Heart left ventricle (tissue), 16 donors: ENCODE measurements at regions of chr2 and their contacts with region 1.

Region 1: DNA sequence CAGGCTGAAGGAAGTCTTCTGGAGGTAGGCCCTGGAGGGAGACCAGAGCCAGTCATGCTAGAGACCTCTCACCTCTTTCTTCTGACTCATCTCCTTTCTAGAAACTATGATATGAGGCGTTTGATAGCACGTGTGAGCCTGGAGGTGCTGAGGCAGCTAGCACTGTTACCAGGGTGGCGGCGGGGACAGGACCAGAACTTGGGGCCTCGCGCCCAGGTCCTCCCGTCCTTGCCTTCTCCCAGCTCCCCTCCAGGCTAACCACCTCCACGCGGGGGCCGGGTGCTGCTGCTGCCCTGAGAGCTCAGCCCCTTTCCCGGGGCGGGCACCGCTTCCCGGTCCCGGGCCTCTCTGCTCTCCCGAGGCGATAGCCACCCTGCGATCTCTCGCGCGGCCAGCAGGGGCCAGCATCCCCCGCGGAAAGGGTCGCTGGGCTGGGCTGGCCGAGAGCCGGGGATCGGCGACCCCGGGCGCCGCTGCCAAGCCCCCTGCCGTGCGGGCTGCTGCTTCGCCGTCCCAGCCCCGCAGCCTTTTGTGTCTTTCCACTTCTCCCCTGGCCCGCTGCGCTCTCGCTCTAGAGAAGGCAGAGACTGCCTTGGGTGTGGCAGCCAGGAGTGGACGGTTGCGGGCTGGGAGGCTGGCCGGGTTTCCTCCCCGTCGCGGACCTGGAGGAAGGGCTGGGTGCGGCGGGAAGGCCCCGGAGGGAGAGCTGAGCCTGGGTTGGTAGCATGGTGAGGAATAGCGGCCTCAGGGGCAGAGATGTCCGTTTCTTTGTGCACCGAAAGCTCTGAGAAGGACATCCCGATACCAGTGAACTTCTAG is 49.1 kb downstream of the TMEM17 start:
- DNase-seq: peak; percentile 67 to 87 (median 74)
- ATAC-seq: peak; percentile 57 to 93 (median 88)
- H3K4me3 ChIP-seq: peak overlapping the region; percentile 40 to 90 (median 68)
- H3K27ac ChIP-seq: peak overlapping the region; percentile 43 to 87 (median 74)
- H3K4me1 ChIP-seq: peaks cover 0 to 16% (median 8%) of the 10 kb centered on the region in 12 donors
- H3K27me3 ChIP-seq: no peaks in the 10 kb centered on the region
- CTCF ChIP-seq: peak in 11 of 12 donors; percentile 89 to 100 (median 97)
- POLR2A ChIP-seq: no peak

Region 2: GRCh38 chr2:62505750-62506420 is 49.0 kb after region 1 on chr2 and contains the start of gene TMEM17:
- intact Hi-C with region 1: loop called in 2 of 10 experiments (anchors 2 to 5 kb)
- DNase-seq: peak; percentile 95 to 96 (median 96)
- ATAC-seq: peak; percentile 98
- H3K4me3 ChIP-seq: peak within 1 kb of the TSS; percentile 58 to 84 (median 76)
- H3K27ac ChIP-seq: peak within 1 kb of the TSS; percentile 80 to 95 (median 88)
- H3K4me1 ChIP-seq: peaks cover 0 to 18% (median 7%) of the 10 kb centered on the region in 12 donors
- H3K27me3 ChIP-seq: no peaks in the 10 kb centered on the region
- CTCF ChIP-seq: peak in 1 of 12 donors; percentile 9
- POLR2A ChIP-seq: peak in 1 of 2 donors; percentile 31
- total RNA-seq, gene TMEM17: 1.2 to 2.3 (median 1.6) TPM

Region 3: GRCh38 chr2:62556086-62556485 is 99.2 kb after region 1 on chr2:
- intact Hi-C with region 1: no loop called
- DNase-seq: no peak
- ATAC-seq: no peak
- H3K4me3 ChIP-seq: no peak overlapping the region
- H3K27ac ChIP-seq: no peak overlapping the region
- H3K4me1 ChIP-seq: no peaks in the 10 kb centered on the region
- H3K27me3 ChIP-seq: no peaks in the 10 kb centered on the region
- CTCF ChIP-seq: no peak
- POLR2A ChIP-seq: no peak

Region 4: GRCh38 chr2:62774555-62775366 is 317.8 kb after region 1 on chr2:
- intact Hi-C with region 1: loop called (anchors 1 to 2 kb)
- DNase-seq: no peak
- ATAC-seq: peak in 2 of 4 donors; percentile 52 to 75
- H3K4me3 ChIP-seq: no peak overlapping the region
- H3K27ac ChIP-seq: peak overlapping the region in 1 of 12 donors; percentile 15
- H3K4me1 ChIP-seq: peaks cover 0 to 7% (median 0%) of the 10 kb centered on the region in 12 donors
- H3K27me3 ChIP-seq: no peaks in the 10 kb centered on the region
- CTCF ChIP-seq: peak; percentile 76 to 96 (median 84)
- POLR2A ChIP-seq: no peak

Region 5: GRCh38 chr2:63023444-63023843 is 566.5 kb after region 1 on chr2:
- intact Hi-C with region 1: loop called in 1 of 10 experiments (anchors 10 kb)
- DNase-seq: no peak
- ATAC-seq: peak in 1 of 4 donors; percentile 42
- H3K4me3 ChIP-seq: no peak overlapping the region
- H3K27ac ChIP-seq: no peak overlapping the region
- H3K4me1 ChIP-seq: no peaks in the 10 kb centered on the region
- H3K27me3 ChIP-seq: no peaks in the 10 kb centered on the region
- CTCF ChIP-seq: peak in 9 of 12 donors; percentile 15 to 43 (median 24)
- POLR2A ChIP-seq: no peak